Colonic mucosa (tissue), 4 donors: ENCODE measurements at regions of chr20 and their contacts with region 1.

Region 1: GRCh38 chr20:53547664-53548239 is 45.9 kb downstream of the ZNF217 start:
- DNase-seq: peak; percentile 46
- H3K4me3 ChIP-seq: no peak overlapping the region
- H3K27ac ChIP-seq: no peak overlapping the region
- H3K4me1 ChIP-seq: no peaks in the 10 kb centered on the region
- H3K27me3 ChIP-seq: no peaks in the 10 kb centered on the region
- CTCF ChIP-seq: peak; percentile 74

Region 2: DNA sequence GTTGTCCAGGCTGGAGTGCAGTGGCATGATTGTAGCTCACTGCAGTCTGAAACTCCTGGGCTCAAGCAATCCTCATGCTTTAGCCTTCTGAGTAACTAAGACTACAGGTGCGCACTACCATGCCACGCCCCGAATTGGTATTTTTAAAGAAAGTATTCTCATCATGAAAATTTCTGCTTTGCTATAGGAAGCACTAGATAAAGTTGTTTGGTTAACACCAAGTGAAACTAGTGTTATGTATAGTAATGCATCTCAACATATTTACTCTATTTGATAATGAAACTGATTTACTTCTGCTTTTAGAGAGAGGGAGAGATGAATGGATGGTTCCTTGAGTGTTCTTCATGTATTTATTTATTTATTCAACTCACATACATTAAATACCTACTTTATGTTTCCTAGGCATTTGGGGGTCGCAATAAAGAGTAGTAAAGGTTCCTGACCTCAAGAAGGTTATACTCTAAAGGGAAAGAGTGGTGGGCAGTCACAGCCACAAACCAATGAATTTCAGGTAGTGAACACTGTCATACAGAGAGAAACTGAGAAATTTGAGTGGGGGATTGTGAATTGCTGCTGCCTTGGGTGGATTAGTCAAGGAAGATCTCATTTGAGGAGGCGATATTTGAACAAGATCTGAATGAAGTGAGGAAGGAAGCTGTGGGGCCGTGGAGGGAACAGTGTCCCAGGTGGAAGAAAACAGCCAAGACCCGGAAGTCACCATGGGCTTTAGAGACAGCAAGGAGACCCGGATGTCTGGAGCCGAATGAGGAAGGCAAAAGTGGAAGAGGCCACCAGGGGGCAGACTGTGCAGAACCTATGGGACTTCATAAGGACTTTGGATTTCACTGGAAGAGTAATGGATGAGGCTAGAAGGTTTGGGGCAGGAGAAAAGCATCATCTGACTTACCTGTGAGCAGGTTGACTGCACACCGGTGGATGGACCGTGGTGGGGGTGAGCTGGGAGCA is 390.0 kb before region 1 on chr20:
- intact Hi-C with region 1: loop called (anchors 2 kb)
- DNase-seq: peak; percentile 67
- H3K4me3 ChIP-seq: no peak overlapping the region
- H3K27ac ChIP-seq: no peak overlapping the region
- H3K4me1 ChIP-seq: no peaks in the 10 kb centered on the region
- H3K27me3 ChIP-seq: no peaks in the 10 kb centered on the region
- CTCF ChIP-seq: peak; percentile 35

Region 3: GRCh38 chr20:53413186-53413631 is 134.5 kb before region 1 on chr20:
- intact Hi-C with region 1: loop called (anchors 2 kb)
- DNase-seq: peak; percentile 53
- H3K4me3 ChIP-seq: no peak overlapping the region
- H3K27ac ChIP-seq: no peak overlapping the region
- H3K4me1 ChIP-seq: no peaks in the 10 kb centered on the region
- H3K27me3 ChIP-seq: no peaks in the 10 kb centered on the region
- CTCF ChIP-seq: peak; percentile 56